ENCODE measurements at regions of chr1 and their contacts with region 1.

Region 1: GRCh38 chr1:181021811-181022434 is 747 bp downstream of the STX6 start:
- DNase-seq: peak in 32 of 35 experiments; percentile 15 to 72 (median 34)
- ATAC-seq: peak; percentile 29 to 48 (median 42)
- H3K4me3 ChIP-seq: peak overlapping the region; percentile 84 to 92
- H3K4me3 Mint-ChIP-seq: peak overlapping the region; percentile 85 to 93 (median 91)
- H3K27ac ChIP-seq: peak overlapping the region; percentile 67
- H3K27ac Mint-ChIP-seq: peak overlapping the region; percentile 87 to 92
- H3K4me1 ChIP-seq: peaks cover 20 to 36% of the 10 kb centered on the region in 2 experiments
- H3K4me1 Mint-ChIP-seq: peaks cover 44 to 58% (median 48%) of the 10 kb centered on the region in 3 donors
- H3K27me3 ChIP-seq: no peaks in the 10 kb centered on the region
- H3K27me3 Mint-ChIP-seq: no peaks in the 10 kb centered on the region

Region 2: GRCh38 chr1:180358649-180359048 is 663.3 kb before region 1 on chr1:
- CTCF ChIA-PET with region 1: no interaction called
- POLR2A ChIA-PET with region 1: interaction called in 1 of 2 experiments, 11 read pairs
- DNase-seq: no peak
- ATAC-seq: no peak
- H3K4me3 ChIP-seq: no peak overlapping the region
- H3K4me3 Mint-ChIP-seq: no peak overlapping the region
- H3K27ac ChIP-seq: no peak overlapping the region
- H3K27ac Mint-ChIP-seq: peak overlapping the region in 1 of 2 donors; percentile 55
- H3K4me1 ChIP-seq: no peaks in the 10 kb centered on the region
- H3K4me1 Mint-ChIP-seq: peaks cover 11 to 21% (median 18%) of the 10 kb centered on the region in 3 donors
- H3K27me3 ChIP-seq: no peaks in the 10 kb centered on the region
- H3K27me3 Mint-ChIP-seq: no peaks in the 10 kb centered on the region

Region 3: GRCh38 chr1:180791806-180792205 is 230.1 kb before region 1 on chr1:
- CTCF ChIA-PET with region 1: no interaction called
- POLR2A ChIA-PET with region 1: no interaction called
- DNase-seq: no peak
- ATAC-seq: no peak
- H3K4me3 ChIP-seq: no peak overlapping the region
- H3K4me3 Mint-ChIP-seq: no peak overlapping the region
- H3K27ac ChIP-seq: no peak overlapping the region
- H3K27ac Mint-ChIP-seq: no peak overlapping the region
- H3K4me1 ChIP-seq: no peaks in the 10 kb centered on the region
- H3K4me1 Mint-ChIP-seq: peaks cover 13 to 15% (median 14%) of the 10 kb centered on the region in 3 donors
- H3K27me3 ChIP-seq: no peaks in the 10 kb centered on the region
- H3K27me3 Mint-ChIP-seq: no peaks in the 10 kb centered on the region

Region 4: DNA sequence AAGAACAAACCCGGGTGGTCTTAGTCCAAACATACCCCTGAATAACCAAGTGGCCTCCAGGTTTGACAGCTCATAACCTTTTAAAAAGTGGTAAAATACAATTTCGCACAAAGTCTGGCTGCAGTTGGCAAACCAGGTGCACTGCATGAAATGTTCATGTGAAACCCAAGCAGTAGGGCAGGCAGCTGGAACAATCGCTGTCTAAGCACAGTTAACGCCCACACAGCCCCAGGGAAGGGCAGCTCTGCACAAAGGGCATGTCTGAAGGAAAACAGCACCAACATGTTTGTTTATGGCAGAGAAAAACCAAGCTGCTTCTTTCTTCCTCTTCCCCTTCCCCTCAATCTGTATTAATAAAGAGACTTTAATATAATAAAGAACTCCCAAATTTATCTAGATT is 59.7 kb before region 1 on chr1:
- CTCF ChIA-PET with region 1: no interaction called
- POLR2A ChIA-PET with region 1: no interaction called
- DNase-seq: no peak
- ATAC-seq: no peak
- H3K4me3 ChIP-seq: no peak overlapping the region
- H3K4me3 Mint-ChIP-seq: no peak overlapping the region
- H3K27ac ChIP-seq: no peak overlapping the region
- H3K27ac Mint-ChIP-seq: no peak overlapping the region
- H3K4me1 ChIP-seq: peaks cover 0 to 3% of the 10 kb centered on the region in 2 experiments
- H3K4me1 Mint-ChIP-seq: peaks cover 0 to 7% (median 4%) of the 10 kb centered on the region in 3 donors
- H3K27me3 ChIP-seq: no peaks in the 10 kb centered on the region
- H3K27me3 Mint-ChIP-seq: no peaks in the 10 kb centered on the region

Region 5: GRCh38 chr1:181033799-181034451 is 12.0 kb after region 1 on chr1 and contains the start of gene MR1:
- CTCF ChIA-PET with region 1: interaction called, 4 to 8 read pairs
- POLR2A ChIA-PET with region 1: interaction called, 5 to 13 read pairs
- DNase-seq: peak in 30 of 35 experiments; percentile 10 to 89 (median 32)
- ATAC-seq: peak; percentile 97 to 98 (median 98)
- H3K4me3 ChIP-seq: peak within 1 kb of the TSS; percentile 63 to 87
- H3K4me3 Mint-ChIP-seq: peak within 1 kb of the TSS; percentile 94 to 99 (median 95)
- H3K27ac ChIP-seq: peak within 1 kb of the TSS; percentile 94
- H3K27ac Mint-ChIP-seq: peak within 1 kb of the TSS; percentile 99 to 100
- H3K4me1 ChIP-seq: peaks cover 31 to 46% of the 10 kb centered on the region in 2 experiments
- H3K4me1 Mint-ChIP-seq: peaks cover 60 to 67% (median 60%) of the 10 kb centered on the region in 3 donors
- H3K27me3 ChIP-seq: no peaks in the 10 kb centered on the region
- H3K27me3 Mint-ChIP-seq: no peaks in the 10 kb centered on the region
- total RNA-seq, gene MR1: 18.3 to 30.7 (median 22.7) TPM

Region 6: GRCh38 chr1:181105134-181106021 is 83.5 kb after region 1 on chr1:
- CTCF ChIA-PET with region 1: interaction called in 1 of 2 experiments, 4 read pairs
- POLR2A ChIA-PET with region 1: interaction called in 1 of 2 experiments, 14 read pairs
- DNase-seq: peak; percentile 86 to 97 (median 92)
- ATAC-seq: peak; percentile 90 to 94 (median 92)
- H3K4me3 ChIP-seq: peak overlapping the region; percentile 58 to 83
- H3K4me3 Mint-ChIP-seq: peak overlapping the region; percentile 77 to 86 (median 85)
- H3K27ac ChIP-seq: peak overlapping the region; percentile 87
- H3K27ac Mint-ChIP-seq: peak overlapping the region; percentile 62 to 90
- H3K4me1 ChIP-seq: peaks cover 29 to 46% of the 10 kb centered on the region in 2 experiments
- H3K4me1 Mint-ChIP-seq: peaks cover 55 to 59% (median 58%) of the 10 kb centered on the region in 3 donors
- H3K27me3 ChIP-seq: peaks cover 0 to 11% of the 10 kb centered on the region in 2 experiments
- H3K27me3 Mint-ChIP-seq: peaks cover 0 to 5% of the 10 kb centered on the region in 2 donors